ENCODE measurements at regions of chr12 and their contacts with region 1.

Region 1: GRCh38 chr12:42482445-42483237 is 106.9 kb downstream of the PRICKLE1 start:
- DNase-seq: no peak
- ATAC-seq: peak; percentile 93
- H3K4me3 ChIP-seq: peak overlapping the region; percentile 54 to 65
- H3K27ac ChIP-seq: peak overlapping the region; percentile 71
- H3K4me1 ChIP-seq: peaks cover 15% of the 10 kb centered on the region; the same call in 1 of the 2 replicates
- H3K27me3 ChIP-seq: peaks cover 16% of the 10 kb centered on the region
- CTCF ChIP-seq: peak; percentile 98

Region 2: DNA sequence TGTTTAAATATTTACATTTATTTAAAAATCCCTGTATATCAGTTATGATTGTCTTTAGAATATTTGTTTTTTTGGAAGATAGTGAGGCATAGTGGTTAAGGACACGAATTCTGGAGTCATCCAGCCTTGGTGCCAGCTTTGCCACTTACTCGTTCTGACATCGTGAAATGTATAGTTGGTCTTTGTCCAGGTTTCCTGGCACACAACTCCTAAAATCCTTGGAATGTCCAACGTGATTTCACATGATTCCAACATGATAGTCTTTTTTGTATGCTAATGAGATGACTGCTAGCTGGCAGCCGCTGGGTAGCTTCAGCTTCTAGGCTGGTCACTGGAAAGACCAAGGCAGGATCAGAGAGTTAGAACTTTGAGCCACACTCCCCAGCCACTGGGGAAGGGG is 42.1 kb after region 1 on chr12:
- CTCF ChIA-PET with region 1: no interaction called
- POLR2A ChIA-PET with region 1: interaction called, 12 read pairs
- in situ Hi-C with region 1: no loop called
- intact Hi-C with region 1: no loop called
- DNase-seq: no peak
- ATAC-seq: no peak
- H3K4me3 ChIP-seq: no peak overlapping the region
- H3K27ac ChIP-seq: no peak overlapping the region
- H3K4me1 ChIP-seq: no peaks in the 10 kb centered on the region
- H3K27me3 ChIP-seq: no peaks in the 10 kb centered on the region
- CTCF ChIP-seq: no peak

Region 3: GRCh38 chr12:42568952-42569915 is 86.6 kb after region 1 on chr12:
- CTCF ChIA-PET with region 1: interaction called, 7 read pairs
- POLR2A ChIA-PET with region 1: no interaction called
- in situ Hi-C with region 1: no loop called
- intact Hi-C with region 1: loop called (anchors 2 kb)
- DNase-seq: peak; percentile 25
- ATAC-seq: peak; percentile 72; the same call in 1 of the 2 replicates
- H3K4me3 ChIP-seq: no peak overlapping the region
- H3K27ac ChIP-seq: no peak overlapping the region
- H3K4me1 ChIP-seq: peaks cover 7% of the 10 kb centered on the region
- H3K27me3 ChIP-seq: no peaks in the 10 kb centered on the region
- CTCF ChIP-seq: peak; percentile 73; the same call in 1 of the 2 replicates

Measured in Panc1 (cell line).